ENCODE measurements at regions of chr14 and their contacts with region 1.

Region 1: DNA sequence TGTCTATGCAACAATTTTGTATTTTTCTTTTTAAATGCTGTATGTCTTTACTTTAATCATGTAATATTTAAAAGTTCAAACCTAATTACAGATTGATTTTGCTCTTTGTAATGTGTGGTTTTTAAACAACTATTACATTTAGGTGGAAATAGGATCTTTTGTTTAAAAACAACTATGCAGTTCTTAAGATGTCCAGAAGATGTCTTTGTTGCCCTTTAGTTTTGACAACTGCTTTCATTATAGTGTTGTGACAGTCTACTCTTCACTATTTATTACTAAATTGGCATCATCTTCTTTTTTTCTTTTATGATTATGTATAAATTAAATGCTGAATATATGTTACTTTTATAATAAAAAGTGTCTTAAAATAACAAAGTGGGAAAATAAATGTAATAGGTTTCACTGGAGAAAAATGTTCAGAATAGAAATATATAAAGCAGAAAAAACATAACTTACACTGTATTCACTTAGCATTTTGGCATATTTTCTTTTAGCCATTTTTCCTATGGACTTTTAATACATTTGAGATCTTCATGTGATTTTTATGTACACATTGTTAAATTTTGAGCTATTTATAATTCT is 27.1 kb upstream of the PCNX4 start:
- DNase-seq: peak; percentile 87
- ATAC-seq: peak; percentile 49
- H3K4me3 ChIP-seq: no peak overlapping the region
- H3K27ac ChIP-seq: no peak overlapping the region
- H3K4me1 ChIP-seq: peaks cover 19% of the 10 kb centered on the region
- H3K27me3 ChIP-seq: no peaks in the 10 kb centered on the region
- CTCF ChIP-seq: peak; percentile 98

Region 2: GRCh38 chr14:59768855-59769375 is 295.7 kb before region 1 on chr14:
- CTCF ChIA-PET with region 1: no interaction called
- POLR2A ChIA-PET with region 1: no interaction called
- intact Hi-C with region 1: no loop called
- DNase-seq: peak; percentile 30
- ATAC-seq: no peak
- H3K4me3 ChIP-seq: no peak overlapping the region
- H3K27ac ChIP-seq: no peak overlapping the region
- H3K4me1 ChIP-seq: no peaks in the 10 kb centered on the region
- H3K27me3 ChIP-seq: peaks cover 68% of the 10 kb centered on the region
- CTCF ChIP-seq: no peak

Region 3: DNA sequence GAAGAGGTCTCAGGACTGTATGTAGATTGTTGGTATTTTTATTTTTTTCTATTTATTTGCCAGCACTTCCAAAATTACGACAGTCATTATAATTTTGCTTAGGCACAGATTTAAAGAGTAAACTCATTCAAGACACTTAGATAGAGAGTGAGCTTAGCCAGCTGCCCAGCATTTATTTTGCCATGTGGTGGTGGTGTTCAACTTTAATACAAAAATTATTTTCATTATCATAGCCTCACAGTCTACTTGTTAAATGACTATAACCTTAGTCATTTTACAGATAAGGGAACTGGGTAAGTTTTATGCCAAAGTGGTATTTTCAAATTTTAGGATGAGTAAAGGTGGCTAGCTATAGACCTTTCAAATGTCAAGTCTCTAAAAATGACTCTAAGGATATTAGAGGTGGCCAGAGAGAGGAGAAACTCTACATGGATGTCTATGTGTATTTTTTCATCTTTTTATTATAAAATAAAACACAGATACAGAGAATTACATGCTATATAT is 78.0 kb before region 1 on chr14:
- CTCF ChIA-PET with region 1: no interaction called
- POLR2A ChIA-PET with region 1: no interaction called
- intact Hi-C with region 1: loop called (anchors 1 kb)
- DNase-seq: peak; percentile 35
- ATAC-seq: peak; percentile 95
- H3K4me3 ChIP-seq: no peak overlapping the region
- H3K27ac ChIP-seq: no peak overlapping the region
- H3K4me1 ChIP-seq: no peaks in the 10 kb centered on the region
- H3K27me3 ChIP-seq: no peaks in the 10 kb centered on the region
- CTCF ChIP-seq: 0 out of 2 replicates have a peak, but pooled peaks have one; percentile 22

Region 4: DNA sequence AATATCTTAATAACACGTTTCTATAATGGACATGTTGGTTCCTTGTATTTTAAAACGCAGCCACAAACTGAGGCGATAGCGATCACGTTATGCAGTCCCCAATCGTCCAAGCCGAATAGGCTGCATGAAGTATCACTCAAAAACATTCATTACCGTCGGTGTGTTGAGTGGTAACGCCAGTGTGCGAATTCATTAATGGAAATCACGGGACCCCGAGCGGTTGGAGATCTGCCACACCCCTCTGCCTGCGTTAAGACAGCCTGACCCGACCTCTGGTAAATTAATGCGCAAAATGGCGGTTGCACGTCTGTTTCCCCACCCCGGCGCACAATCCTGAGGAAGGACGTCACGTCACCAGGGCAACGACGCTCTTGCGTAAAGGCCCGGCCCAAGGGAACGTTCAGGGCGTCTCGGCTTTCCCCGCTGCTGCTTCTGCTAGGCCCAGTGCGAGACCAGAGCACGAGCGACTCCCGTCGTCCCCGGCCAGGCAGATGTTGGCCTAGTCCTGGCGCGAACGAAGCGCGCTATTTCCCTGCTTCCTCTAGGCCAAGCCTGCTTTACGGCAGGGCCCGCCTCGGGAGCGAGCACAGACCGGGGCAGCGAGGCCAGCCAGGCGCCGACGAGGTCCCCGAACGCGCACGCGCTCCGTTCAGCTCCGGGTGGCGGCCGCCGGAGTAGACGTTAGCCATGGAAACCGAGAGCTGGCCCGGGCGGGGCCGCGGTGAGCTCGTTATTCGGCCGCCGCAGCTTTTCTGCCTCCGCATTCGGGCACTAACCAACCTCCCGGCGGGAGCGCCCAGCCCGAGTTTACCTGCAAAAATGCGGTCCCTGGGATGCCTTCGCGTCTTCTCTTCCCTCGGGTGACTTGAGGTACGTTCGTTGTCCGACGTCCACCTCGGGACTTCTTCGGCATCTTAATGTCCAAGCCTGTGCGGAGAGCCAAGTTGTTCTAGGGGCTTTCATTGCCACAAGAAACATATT is 27.3 kb after region 1 on chr14 and contains the start of gene PCNX4:
- CTCF ChIA-PET with region 1: no interaction called
- POLR2A ChIA-PET with region 1: no interaction called
- intact Hi-C with region 1: loop called (anchors 1 kb)
- DNase-seq: peak; percentile 100
- ATAC-seq: peak; percentile 93
- H3K4me3 ChIP-seq: peak within 1 kb of the TSS; percentile 76
- H3K27ac ChIP-seq: peak within 1 kb of the TSS; percentile 85
- H3K4me1 ChIP-seq: peaks cover 42% of the 10 kb centered on the region
- H3K27me3 ChIP-seq: no peaks in the 10 kb centered on the region
- CTCF ChIP-seq: no peak
- total RNA-seq, gene PCNX4: 117 and 151 TPM in 2 replicates

Region 5: DNA sequence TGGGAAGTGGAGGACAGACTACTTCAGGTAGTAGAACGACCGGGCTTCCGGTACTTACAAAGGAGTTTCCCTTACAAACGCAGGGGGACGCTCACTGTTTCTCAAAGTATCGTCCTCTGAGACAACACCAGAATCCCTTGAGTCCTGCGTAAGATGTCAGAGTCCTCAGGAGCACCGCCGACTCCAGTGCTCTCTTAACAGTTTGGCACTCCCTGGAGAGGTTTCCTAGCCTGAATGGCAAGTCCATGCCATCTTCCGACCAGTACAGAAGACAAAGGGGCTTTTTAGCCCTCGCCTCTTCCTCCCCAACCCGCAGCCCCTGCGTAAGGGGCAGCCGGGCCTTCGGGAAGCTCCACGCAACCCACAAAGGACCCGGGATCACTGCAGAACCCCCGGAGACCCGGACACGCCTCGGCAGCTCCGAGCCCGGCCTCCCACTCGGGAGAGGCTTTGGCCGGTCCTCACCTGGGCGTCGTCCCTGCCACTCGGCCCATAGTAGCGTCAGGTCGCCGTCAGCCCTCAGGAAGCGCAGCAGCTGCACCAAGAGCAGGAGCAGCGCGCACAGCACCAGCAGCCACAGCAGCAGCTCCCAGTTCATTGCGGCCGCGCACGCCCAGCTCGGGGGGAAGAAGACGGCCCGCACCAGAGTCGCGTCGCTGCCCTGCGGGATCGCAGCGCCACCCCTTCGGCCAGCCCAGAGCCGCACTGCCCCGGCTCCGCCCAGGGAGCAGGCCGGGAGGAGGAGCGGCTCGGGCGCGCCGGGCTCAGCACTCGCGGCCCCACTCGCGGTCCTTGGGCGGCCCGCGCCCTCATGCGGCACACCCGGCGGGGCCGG is 100.3 kb after region 1 on chr14 and contains the start of gene DHRS7:
- CTCF ChIA-PET with region 1: no interaction called
- POLR2A ChIA-PET with region 1: interaction called, 3 read pairs
- intact Hi-C with region 1: loop called (anchors 1 kb)
- DNase-seq: peak; percentile 99
- ATAC-seq: peak; percentile 95
- H3K4me3 ChIP-seq: peak within 1 kb of the TSS; percentile 75
- H3K27ac ChIP-seq: peak within 1 kb of the TSS; percentile 61
- H3K4me1 ChIP-seq: peaks cover 34% of the 10 kb centered on the region
- H3K27me3 ChIP-seq: no peaks in the 10 kb centered on the region
- CTCF ChIP-seq: peak; percentile 85
- total RNA-seq, gene DHRS7: 236 and 266 TPM in 2 replicates

Measured in PC-3 (cell line).